Panc1 (cell line): ENCODE measurements at regions of chr19 and their contacts with region 1.

Region 1: DNA sequence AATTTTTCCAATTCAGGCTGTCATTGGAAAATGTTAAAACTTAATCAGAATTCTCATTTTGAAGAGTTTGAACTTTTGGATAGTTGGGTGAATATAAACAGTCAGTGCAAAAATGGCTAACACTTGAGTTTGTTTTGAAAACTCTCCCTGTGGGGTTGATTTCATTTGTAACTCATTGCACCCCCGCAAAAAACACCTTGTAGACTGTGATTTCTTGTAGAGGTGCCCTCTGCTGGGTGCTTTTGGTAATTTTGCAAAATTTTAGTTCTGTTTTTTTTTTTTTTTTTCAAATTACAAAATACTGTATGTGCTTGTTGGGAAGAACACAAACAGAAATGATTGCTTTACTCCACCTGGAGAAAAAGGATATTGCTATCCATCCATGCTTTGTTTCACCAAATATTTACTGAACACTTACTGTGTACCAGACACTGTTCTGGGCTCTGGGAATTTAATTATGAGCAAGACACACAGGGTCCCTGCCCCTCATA is 28.2 kb upstream of the GPI start:
- DNase-seq: no peak
- ATAC-seq: peak; percentile 59
- H3K4me3 ChIP-seq: no peak overlapping the region
- H3K27ac ChIP-seq: no peak overlapping the region
- H3K4me1 ChIP-seq: no peaks in the 10 kb centered on the region
- H3K27me3 ChIP-seq: no peaks in the 10 kb centered on the region
- CTCF ChIP-seq: peak; percentile 84

Region 2: GRCh38 chr19:33788676-33789075 is 548.1 kb before region 1 on chr19:
- CTCF ChIA-PET with region 1: no interaction called
- POLR2A ChIA-PET with region 1: interaction called, 12 read pairs
- in situ Hi-C with region 1: no loop called
- intact Hi-C with region 1: no loop called
- DNase-seq: no peak
- ATAC-seq: no peak
- H3K4me3 ChIP-seq: no peak overlapping the region
- H3K27ac ChIP-seq: no peak overlapping the region
- H3K4me1 ChIP-seq: no peaks in the 10 kb centered on the region
- H3K27me3 ChIP-seq: peaks cover 3% of the 10 kb centered on the region
- CTCF ChIP-seq: no peak

Region 3: DNA sequence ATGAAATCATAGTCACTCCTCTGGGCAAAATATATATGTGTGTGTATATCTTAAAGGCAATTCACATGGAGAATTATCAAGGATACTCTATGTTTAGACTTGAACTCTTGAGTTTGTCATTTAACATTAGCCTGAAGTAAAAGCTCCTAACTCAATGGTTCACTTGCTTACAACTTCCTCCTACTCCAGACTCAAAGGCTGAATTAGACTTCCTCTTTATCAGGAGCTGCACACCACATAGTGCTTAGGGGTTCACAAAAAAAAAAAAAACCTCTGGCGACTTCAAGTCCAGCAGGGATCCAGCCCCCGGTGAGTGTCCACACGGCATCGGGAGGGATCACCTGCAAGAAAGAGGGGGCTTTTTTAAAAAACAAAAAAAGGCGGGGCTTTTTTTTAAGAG is 232.7 kb before region 1 on chr19:
- CTCF ChIA-PET with region 1: no interaction called
- POLR2A ChIA-PET with region 1: no interaction called
- in situ Hi-C with region 1: no loop called
- intact Hi-C with region 1: no loop called
- DNase-seq: no peak
- ATAC-seq: no peak
- H3K4me3 ChIP-seq: no peak overlapping the region
- H3K27ac ChIP-seq: no peak overlapping the region
- H3K4me1 ChIP-seq: no peaks in the 10 kb centered on the region
- H3K27me3 ChIP-seq: no peaks in the 10 kb centered on the region
- CTCF ChIP-seq: no peak

Region 4: DNA sequence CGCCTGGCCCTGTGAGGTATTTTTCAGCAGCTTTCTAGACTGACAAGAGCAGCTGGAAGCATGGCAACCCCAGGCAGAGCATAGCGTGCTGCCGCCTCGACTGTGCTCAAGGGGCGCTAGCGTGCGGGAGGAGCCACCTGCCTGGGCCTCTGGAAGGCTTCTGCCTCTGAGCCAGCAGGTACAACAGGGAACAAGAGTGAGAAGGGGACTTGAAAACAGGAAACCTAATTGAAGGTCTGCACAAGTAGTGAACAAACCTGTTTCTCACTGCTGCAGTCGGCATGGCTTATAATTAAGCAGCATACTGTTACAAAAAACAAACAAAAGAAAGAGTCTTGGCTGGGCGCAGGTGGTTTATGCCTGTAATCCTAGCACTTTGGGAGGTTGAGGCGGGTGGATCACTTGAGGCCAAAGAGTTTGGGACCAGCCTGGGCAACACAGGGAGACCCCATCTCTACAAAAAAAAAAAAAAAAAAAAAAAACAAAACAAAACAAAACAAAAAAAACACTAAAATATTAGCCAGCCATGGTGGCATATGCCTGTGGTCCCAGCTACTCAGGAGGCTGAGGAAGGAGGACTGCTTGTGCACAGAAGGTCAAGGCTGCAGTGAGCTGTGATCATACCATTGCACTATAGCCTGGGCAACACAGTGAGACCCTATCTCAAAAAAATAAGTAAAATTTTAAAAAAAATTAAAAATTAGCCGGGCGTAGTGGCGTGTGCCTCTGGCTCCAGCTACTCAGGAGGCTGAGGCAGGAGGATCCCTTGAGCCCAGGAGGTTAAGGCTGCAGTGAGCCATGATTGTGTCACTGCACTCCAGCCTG is 95.1 kb before region 1 on chr19:
- CTCF ChIA-PET with region 1: no interaction called
- POLR2A ChIA-PET with region 1: no interaction called
- in situ Hi-C with region 1: no loop called
- intact Hi-C with region 1: loop called (anchors 5 kb)
- DNase-seq: no peak
- ATAC-seq: peak; percentile 91
- H3K4me3 ChIP-seq: no peak overlapping the region
- H3K27ac ChIP-seq: no peak overlapping the region
- H3K4me1 ChIP-seq: peaks cover 3% of the 10 kb centered on the region; the same call in 1 of the 2 replicates
- H3K27me3 ChIP-seq: no peaks in the 10 kb centered on the region
- CTCF ChIP-seq: no peak; the same call in 1 of the 2 replicates

Region 5: GRCh38 chr19:34253699-34254551 is 82.9 kb before region 1 on chr19:
- CTCF ChIA-PET with region 1: no interaction called
- POLR2A ChIA-PET with region 1: no interaction called
- in situ Hi-C with region 1: no loop called
- intact Hi-C with region 1: no loop called
- DNase-seq: no peak
- ATAC-seq: peak; percentile 61
- H3K4me3 ChIP-seq: peak overlapping the region; percentile 78 to 91
- H3K27ac ChIP-seq: peak overlapping the region; percentile 91
- H3K4me1 ChIP-seq: peaks cover 12% of the 10 kb centered on the region; the same call in 1 of the 2 replicates
- H3K27me3 ChIP-seq: no peaks in the 10 kb centered on the region
- CTCF ChIP-seq: no peak